Prostate gland (tissue), 2 donors: ENCODE measurements at regions of chr6 and their contacts with region 1.

Region 1: GRCh38 chr6:33585403-33586107 is 5.5 kb upstream of the BAK1 start:
- DNase-seq: peak; percentile 72
- H3K4me3 ChIP-seq: no peak overlapping the region
- H3K27ac ChIP-seq: no peak overlapping the region
- H3K4me1 ChIP-seq: no peaks in the 10 kb centered on the region
- H3K27me3 ChIP-seq: no peaks in the 10 kb centered on the region
- CTCF ChIP-seq: peak; percentile 89 to 99 (median 96)
- POLR2A ChIP-seq: no peak

Region 2: DNA sequence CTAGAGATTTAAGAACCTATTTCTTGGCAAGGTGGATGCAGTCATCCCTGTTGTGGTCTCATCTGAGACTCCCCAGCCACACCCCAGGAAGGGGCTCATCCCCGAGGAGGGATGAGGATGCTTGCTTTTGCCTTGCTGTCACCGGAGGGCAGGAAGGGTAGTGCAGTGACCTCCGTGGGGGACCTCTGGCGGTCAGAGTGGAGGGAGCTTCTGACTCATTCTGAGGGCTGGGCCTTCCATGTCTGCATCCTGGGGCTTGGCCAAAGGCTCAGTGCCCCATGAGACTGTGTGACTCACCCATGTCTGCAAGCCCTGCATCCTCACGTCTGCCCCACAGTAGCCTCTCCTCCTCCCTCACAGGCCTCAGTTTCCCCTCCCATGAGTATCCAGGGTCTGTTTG is 87.3 kb after region 1 on chr6:
- intact Hi-C with region 1: loop called (anchors 5 kb)
- DNase-seq: no peak
- H3K4me3 ChIP-seq: no peak overlapping the region
- H3K27ac ChIP-seq: no peak overlapping the region
- H3K4me1 ChIP-seq: no peaks in the 10 kb centered on the region
- H3K27me3 ChIP-seq: no peaks in the 10 kb centered on the region
- CTCF ChIP-seq: peak in 2 of 4 experiments; percentile 28 to 54
- POLR2A ChIP-seq: no peak

Region 3: GRCh38 chr6:33696548-33697518 is 111.3 kb after region 1 on chr6:
- intact Hi-C with region 1: loop called (anchors 5 kb)
- DNase-seq: peak; percentile 70
- H3K4me3 ChIP-seq: no peak overlapping the region
- H3K27ac ChIP-seq: peak overlapping the region; percentile 37 to 58
- H3K4me1 ChIP-seq: peaks cover 15% of the 10 kb centered on the region
- H3K27me3 ChIP-seq: no peaks in the 10 kb centered on the region
- CTCF ChIP-seq: no peak
- POLR2A ChIP-seq: no peak